Right lobe of liver (tissue), 6 donors: ENCODE measurements at regions of chr19 and their contacts with region 1.

Region 1: GRCh38 chr19:2070436-2070827 is 19.4 kb upstream of the MKNK2 start:
- DNase-seq: no peak
- ATAC-seq: peak in 2 of 4 donors; percentile 19 to 25
- H3K4me3 ChIP-seq: no peak overlapping the region
- H3K27ac ChIP-seq: no peak overlapping the region
- H3K4me1 ChIP-seq: peaks cover 0 to 8% (median 4%) of the 10 kb centered on the region in 4 donors
- H3K27me3 ChIP-seq: no peaks in the 10 kb centered on the region
- CTCF ChIP-seq: no peak
- POLR2A ChIP-seq: no peak

Region 2: GRCh38 chr19:2016041-2016807 is 54.2 kb before region 1 on chr19:
- intact Hi-C with region 1: loop called (anchors 2 to 5 kb)
- DNase-seq: peak; percentile 72 to 83 (median 80)
- ATAC-seq: peak; percentile 88 to 90 (median 89)
- H3K4me3 ChIP-seq: no peak overlapping the region
- H3K27ac ChIP-seq: no peak overlapping the region
- H3K4me1 ChIP-seq: peaks cover 0 to 3% (median 0%) of the 10 kb centered on the region in 4 donors
- H3K27me3 ChIP-seq: no peaks in the 10 kb centered on the region
- CTCF ChIP-seq: no peak
- POLR2A ChIP-seq: no peak

Region 3: GRCh38 chr19:2021453-2022140 is 48.8 kb before region 1 on chr19:
- intact Hi-C with region 1: loop called (anchors 2 to 5 kb)
- DNase-seq: no peak
- ATAC-seq: no peak
- H3K4me3 ChIP-seq: no peak overlapping the region
- H3K27ac ChIP-seq: no peak overlapping the region
- H3K4me1 ChIP-seq: peaks cover 0 to 3% (median 0%) of the 10 kb centered on the region in 4 donors
- H3K27me3 ChIP-seq: no peaks in the 10 kb centered on the region
- CTCF ChIP-seq: no peak
- POLR2A ChIP-seq: no peak

Region 4: GRCh38 chr19:2151339-2152229 is 81.2 kb after region 1 on chr19 and contains the start of gene AP3D1:
- intact Hi-C with region 1: no loop called
- DNase-seq: peak; percentile 100
- ATAC-seq: peak; percentile 91 to 96 (median 94)
- H3K4me3 ChIP-seq: peak within 1 kb of the TSS; percentile 58 to 98 (median 92)
- H3K27ac ChIP-seq: peak within 1 kb of the TSS; percentile 32 to 80 (median 59)
- H3K4me1 ChIP-seq: peaks cover 0 to 28% (median 14%) of the 10 kb centered on the region in 4 donors
- H3K27me3 ChIP-seq: no peaks in the 10 kb centered on the region
- CTCF ChIP-seq: no peak
- POLR2A ChIP-seq: peak; percentile 48
- total RNA-seq, gene AP3D1: 55.5 to 99.0 (median 65.5) TPM